Activated B cell treated with CpG ODN at 0.5 μM for 24 hours (primary cell): ENCODE measurements at regions of chr12 and their contacts with region 1.

Region 1: DNA sequence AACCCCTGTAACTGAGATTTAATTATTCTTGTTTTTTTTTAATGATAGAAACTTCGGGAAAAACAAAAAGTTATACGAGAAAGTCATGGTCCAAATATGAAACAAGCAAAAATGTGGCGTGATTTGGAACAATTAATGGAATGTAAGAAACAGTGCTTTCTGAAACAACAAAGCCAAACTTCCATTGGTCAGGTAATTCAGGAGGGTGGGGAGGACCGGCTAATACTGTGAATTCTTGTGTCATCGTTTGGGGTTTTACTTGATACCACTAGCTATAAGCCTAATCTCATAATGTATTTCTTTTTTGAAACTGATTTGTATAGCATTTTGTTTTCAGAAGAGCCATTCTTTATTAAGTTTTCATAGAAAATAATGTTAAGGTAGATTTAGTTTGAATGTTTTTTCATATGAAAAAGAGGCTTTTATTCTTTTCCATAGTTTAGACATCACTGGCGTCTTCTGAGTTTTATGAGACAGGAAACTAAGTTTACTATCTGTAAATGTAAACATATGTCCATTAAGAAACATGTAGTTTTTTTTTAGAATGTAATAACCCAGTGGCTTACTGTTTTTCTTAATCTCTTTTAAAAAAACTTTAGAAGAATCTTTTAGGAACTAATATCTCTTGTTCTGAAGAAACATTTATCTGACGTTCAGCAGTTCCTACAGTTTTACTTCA is 62.9 kb upstream of the ATP2A2 start:
- DNase-seq: no peak
- ATAC-seq: no peak
- H3K4me3 Mint-ChIP-seq: no peak overlapping the region
- H3K27ac Mint-ChIP-seq: no peak overlapping the region
- H3K4me1 Mint-ChIP-seq: no peaks in the 10 kb centered on the region
- H3K27me3 Mint-ChIP-seq: no peaks in the 10 kb centered on the region
- CTCF ChIP-seq: no peak

Region 2: GRCh38 chr12:109888179-109889020 is 329.7 kb before region 1 on chr12:
- CTCF ChIA-PET with region 1: no interaction called
- POLR2A ChIA-PET with region 1: no interaction called
- intact Hi-C with region 1: no loop called
- DNase-seq: no peak
- ATAC-seq: peak; percentile 58
- H3K4me3 Mint-ChIP-seq: peak overlapping the region; percentile 63
- H3K27ac Mint-ChIP-seq: peak overlapping the region; percentile 95
- H3K4me1 Mint-ChIP-seq: peaks cover 54% of the 10 kb centered on the region
- H3K27me3 Mint-ChIP-seq: no peaks in the 10 kb centered on the region
- CTCF ChIP-seq: no peak

Region 3: GRCh38 chr12:109944561-109945359 is 273.4 kb before region 1 on chr12:
- CTCF ChIA-PET with region 1: no interaction called
- POLR2A ChIA-PET with region 1: no interaction called
- intact Hi-C with region 1: no loop called
- DNase-seq: no peak
- ATAC-seq: no peak
- H3K4me3 Mint-ChIP-seq: no peak overlapping the region
- H3K27ac Mint-ChIP-seq: peak overlapping the region; percentile 4
- H3K4me1 Mint-ChIP-seq: peaks cover 24% of the 10 kb centered on the region
- H3K27me3 Mint-ChIP-seq: no peaks in the 10 kb centered on the region
- CTCF ChIP-seq: no peak

Region 4: GRCh38 chr12:110270125-110270962 is 52.2 kb after region 1 on chr12:
- CTCF ChIA-PET with region 1: no interaction called
- POLR2A ChIA-PET with region 1: no interaction called
- intact Hi-C with region 1: loop called (anchors 2 kb)
- DNase-seq: no peak
- ATAC-seq: no peak
- H3K4me3 Mint-ChIP-seq: no peak overlapping the region
- H3K27ac Mint-ChIP-seq: no peak overlapping the region
- H3K4me1 Mint-ChIP-seq: no peaks in the 10 kb centered on the region
- H3K27me3 Mint-ChIP-seq: peaks cover 21% of the 10 kb centered on the region
- CTCF ChIP-seq: no peak